Activated CD4-positive, alpha-beta memory T cell treated with anti-CD3 and anti-CD28 coated beads for 36 hours (primary cell): ENCODE measurements at regions of chr2 and their contacts with region 1.

Region 1: GRCh38 chr2:57981083-57981768 is 65.4 kb upstream of the VRK2 start:
- DNase-seq: no peak
- H3K4me3 Mint-ChIP-seq: no peak overlapping the region
- H3K27ac Mint-ChIP-seq: no peak overlapping the region
- H3K4me1 Mint-ChIP-seq: no peaks in the 10 kb centered on the region
- H3K27me3 Mint-ChIP-seq: no peaks in the 10 kb centered on the region

Region 2: GRCh38 chr2:57962861-57963260 is 18.4 kb before region 1 on chr2:
- CTCF ChIA-PET with region 1: no interaction called
- POLR2A ChIA-PET with region 1: no interaction called
- intact Hi-C with region 1: no loop called
- DNase-seq: no peak
- H3K4me3 Mint-ChIP-seq: no peak overlapping the region
- H3K27ac Mint-ChIP-seq: no peak overlapping the region
- H3K4me1 Mint-ChIP-seq: no peaks in the 10 kb centered on the region
- H3K27me3 Mint-ChIP-seq: no peaks in the 10 kb centered on the region

Region 3: GRCh38 chr2:58146707-58147106 is 165.5 kb after region 1 on chr2:
- CTCF ChIA-PET with region 1: no interaction called
- POLR2A ChIA-PET with region 1: no interaction called
- intact Hi-C with region 1: loop called (anchors 10 kb)
- DNase-seq: peak; percentile 12
- H3K4me3 Mint-ChIP-seq: no peak overlapping the region
- H3K27ac Mint-ChIP-seq: no peak overlapping the region
- H3K4me1 Mint-ChIP-seq: peaks cover 8% of the 10 kb centered on the region
- H3K27me3 Mint-ChIP-seq: no peaks in the 10 kb centered on the region

Region 4: DNA sequence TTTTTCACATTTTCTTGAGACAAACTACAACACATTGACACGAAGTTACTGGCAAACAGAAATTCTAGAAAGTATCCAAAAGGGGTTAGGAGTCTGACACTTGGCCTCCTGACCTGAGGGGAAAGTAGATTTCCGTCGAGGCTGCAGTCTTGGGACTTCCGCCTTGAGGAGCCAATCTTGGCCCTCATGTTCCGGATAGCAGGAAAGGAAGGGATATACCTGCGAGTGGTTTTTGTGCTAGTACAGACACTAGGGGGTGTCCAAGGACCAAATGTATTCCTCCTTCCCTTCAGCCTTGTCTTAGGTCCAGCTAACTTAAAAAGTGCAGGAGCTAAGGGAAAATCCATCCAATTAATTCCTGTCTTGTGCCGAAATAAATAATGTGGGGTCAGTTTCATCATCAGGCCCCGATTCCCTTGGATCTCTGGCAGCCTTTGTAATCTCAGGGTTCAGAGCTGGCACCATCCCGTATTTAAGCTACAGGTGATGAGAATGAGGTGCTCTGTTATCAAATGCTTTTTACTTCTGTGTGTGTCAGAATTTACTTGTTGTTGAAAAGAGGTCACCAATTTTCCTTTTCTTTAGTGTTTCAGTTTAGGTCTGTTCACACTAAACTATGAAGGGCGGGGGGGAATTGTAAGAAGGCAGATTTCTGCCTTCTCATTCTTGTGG is 590.1 kb after region 1 on chr2:
- CTCF ChIA-PET with region 1: no interaction called
- POLR2A ChIA-PET with region 1: no interaction called
- intact Hi-C with region 1: no loop called
- DNase-seq: no peak
- H3K4me3 Mint-ChIP-seq: no peak overlapping the region
- H3K27ac Mint-ChIP-seq: no peak overlapping the region
- H3K4me1 Mint-ChIP-seq: no peaks in the 10 kb centered on the region
- H3K27me3 Mint-ChIP-seq: no peaks in the 10 kb centered on the region